ENCODE measurements at regions of chr1 and their contacts with region 1.

Region 1: DNA sequence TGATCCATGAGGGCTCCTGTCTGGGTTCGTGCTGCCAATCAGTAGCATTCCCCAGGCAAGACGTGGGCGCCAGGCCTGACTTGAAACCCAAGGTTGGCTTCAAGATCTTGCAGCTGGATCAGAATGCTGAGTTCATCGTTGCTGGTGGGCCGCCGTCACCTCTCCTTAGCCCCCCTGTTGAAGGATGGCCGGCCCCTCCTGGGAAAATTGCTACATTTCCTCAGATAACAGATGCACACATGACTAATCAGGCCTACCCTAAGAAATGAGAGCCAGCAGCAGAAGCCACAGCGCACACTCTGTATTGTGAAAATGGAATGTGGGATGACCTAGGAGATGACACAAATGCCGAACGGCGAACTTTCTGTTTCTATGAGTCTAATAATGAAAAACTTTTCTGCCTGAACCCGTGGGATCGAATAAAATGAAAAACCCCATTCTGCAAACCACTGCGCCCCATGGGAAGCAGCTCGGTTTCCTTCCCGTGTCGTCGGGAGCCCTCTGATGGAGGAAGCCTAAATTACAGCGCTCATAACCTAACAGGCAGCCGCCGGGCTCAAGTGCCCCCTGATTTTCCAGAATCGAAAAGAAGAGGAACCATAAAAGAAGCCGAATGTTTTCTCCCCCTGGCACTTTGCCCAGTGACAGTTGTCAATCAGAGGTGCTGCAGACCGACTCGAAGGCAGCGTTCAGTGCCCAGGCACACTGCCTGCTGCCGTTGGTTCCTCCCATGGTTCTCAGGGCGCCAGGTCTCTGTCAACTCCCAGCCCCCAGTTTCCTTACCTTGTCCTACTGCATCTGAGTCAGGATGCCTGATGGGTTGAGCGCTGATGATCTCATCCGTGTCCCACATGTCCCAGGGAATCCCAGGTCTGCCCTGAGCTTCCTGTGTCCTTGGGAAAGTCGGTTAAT is 38.2 kb upstream of the H6PD start:
- DNase-seq: peak; percentile 72
- H3K4me3 ChIP-seq: no peak overlapping the region
- H3K27ac ChIP-seq: no peak overlapping the region
- H3K4me1 ChIP-seq: peaks cover 12% of the 10 kb centered on the region
- H3K27me3 ChIP-seq: peaks cover 37% of the 10 kb centered on the region
- CTCF ChIP-seq: peak; percentile 85

Region 2: DNA sequence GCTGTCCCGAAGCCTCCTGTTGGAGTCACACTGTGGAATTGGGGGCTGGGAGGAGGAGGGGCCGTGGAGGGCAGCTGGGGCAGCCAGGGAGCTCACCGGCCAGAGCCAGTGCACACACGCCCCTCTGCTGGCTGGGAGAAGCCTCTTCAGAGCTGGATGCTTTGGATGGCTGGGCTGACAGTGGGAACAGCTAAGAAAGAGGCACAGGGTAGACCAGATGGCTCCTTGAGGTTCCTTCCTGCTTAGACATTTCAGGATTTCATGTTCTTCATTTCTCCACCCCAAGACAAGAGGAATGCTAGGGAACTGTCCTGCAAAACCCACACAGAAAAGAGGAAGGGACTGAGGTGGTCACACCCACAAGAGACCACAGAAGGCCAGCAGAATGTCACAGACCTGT is 1680.0 kb before region 1 on chr1:
- CTCF ChIA-PET with region 1: no interaction called
- POLR2A ChIA-PET with region 1: no interaction called
- intact Hi-C with region 1: no loop called
- DNase-seq: no peak
- H3K4me3 ChIP-seq: no peak overlapping the region
- H3K27ac ChIP-seq: no peak overlapping the region
- H3K4me1 ChIP-seq: no peaks in the 10 kb centered on the region
- H3K27me3 ChIP-seq: no peaks in the 10 kb centered on the region
- CTCF ChIP-seq: 0 out of 2 replicates have a peak, but pooled peaks have one; percentile 15

Region 3: DNA sequence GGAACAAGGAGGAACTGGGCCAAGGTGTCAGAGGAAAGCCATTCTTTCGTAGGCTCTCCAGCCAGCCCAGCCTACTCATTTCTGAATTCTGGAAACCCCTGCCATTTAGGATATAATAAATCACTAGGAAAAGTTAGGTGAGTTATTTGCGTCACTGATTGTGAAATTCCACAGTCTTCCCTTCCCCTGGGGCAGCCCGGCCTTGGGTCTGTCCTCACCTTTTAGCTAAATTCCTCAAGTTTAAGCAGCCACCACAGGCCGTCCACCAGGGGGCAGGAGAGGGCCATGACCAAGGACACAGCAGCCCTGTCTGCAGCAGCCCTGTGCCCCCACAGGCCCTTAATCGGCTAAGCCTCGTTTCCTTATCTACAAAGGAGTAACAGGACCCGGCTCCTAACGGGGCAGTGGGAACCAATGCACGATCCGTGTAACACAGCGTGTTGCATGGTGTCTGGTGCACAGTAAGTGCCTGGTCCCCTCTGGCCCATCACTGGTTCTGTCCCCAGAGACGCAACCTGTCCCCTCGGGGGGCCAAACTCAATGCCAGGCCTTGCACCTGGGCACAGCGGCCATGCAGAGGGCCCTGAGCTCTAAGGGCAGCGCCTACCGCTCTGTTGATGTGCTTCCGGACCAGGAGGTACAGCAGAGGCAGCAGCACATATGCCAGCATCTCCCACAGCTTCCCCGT is 85.6 kb before region 1 on chr1:
- CTCF ChIA-PET with region 1: interaction called, 7 read pairs
- POLR2A ChIA-PET with region 1: no interaction called
- intact Hi-C with region 1: loop called (anchors 1 kb)
- DNase-seq: peak; percentile 87
- H3K4me3 ChIP-seq: no peak overlapping the region
- H3K27ac ChIP-seq: no peak overlapping the region
- H3K4me1 ChIP-seq: no peaks in the 10 kb centered on the region
- H3K27me3 ChIP-seq: no peaks in the 10 kb centered on the region
- CTCF ChIP-seq: peak; percentile 95

Region 4: GRCh38 chr1:9118186-9118585 is 78.2 kb before region 1 on chr1:
- CTCF ChIA-PET with region 1: interaction called, 12 read pairs
- POLR2A ChIA-PET with region 1: no interaction called
- intact Hi-C with region 1: no loop called
- DNase-seq: no peak
- H3K4me3 ChIP-seq: no peak overlapping the region
- H3K27ac ChIP-seq: no peak overlapping the region
- H3K4me1 ChIP-seq: no peaks in the 10 kb centered on the region
- H3K27me3 ChIP-seq: no peaks in the 10 kb centered on the region
- CTCF ChIP-seq: no peak

Region 5: DNA sequence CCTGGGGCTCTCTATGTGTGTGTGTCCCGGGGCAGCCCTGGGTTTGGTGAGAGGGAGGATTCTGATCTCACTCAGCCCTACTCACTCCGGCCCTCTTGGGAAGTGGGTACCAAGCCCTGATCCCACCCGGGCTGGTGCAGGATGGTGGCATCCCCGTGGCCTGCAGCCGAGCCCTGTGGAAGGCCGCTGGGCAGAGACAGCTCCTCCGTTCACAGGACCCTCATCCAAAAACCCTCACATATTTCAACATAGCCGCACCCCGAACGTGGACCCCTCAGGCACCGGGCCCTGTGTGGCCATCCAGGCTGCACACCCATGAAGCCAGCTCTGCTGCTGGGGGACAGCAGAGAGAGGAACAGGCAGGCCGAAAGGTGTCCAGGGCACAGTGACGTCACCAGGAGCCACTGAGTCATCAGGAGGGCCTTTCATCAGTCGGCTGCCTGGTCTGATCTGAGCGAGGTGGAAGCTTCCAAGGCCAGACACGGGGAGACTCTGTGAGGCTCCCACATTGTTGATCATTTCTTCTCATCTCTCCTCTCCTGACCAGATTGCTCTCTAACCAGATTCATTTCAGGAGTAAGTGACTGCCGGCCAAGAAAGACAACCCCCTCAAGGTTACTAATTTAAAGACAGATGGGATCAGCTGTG is 51.2 kb before region 1 on chr1:
- CTCF ChIA-PET with region 1: interaction called, 18 read pairs
- POLR2A ChIA-PET with region 1: no interaction called
- intact Hi-C with region 1: loop called (anchors 1 kb)
- DNase-seq: no peak
- H3K4me3 ChIP-seq: no peak overlapping the region
- H3K27ac ChIP-seq: no peak overlapping the region
- H3K4me1 ChIP-seq: no peaks in the 10 kb centered on the region
- H3K27me3 ChIP-seq: no peaks in the 10 kb centered on the region
- CTCF ChIP-seq: no peak